ENCODE measurements at regions of chr11 and their contacts with region 1.

Region 1: DNA sequence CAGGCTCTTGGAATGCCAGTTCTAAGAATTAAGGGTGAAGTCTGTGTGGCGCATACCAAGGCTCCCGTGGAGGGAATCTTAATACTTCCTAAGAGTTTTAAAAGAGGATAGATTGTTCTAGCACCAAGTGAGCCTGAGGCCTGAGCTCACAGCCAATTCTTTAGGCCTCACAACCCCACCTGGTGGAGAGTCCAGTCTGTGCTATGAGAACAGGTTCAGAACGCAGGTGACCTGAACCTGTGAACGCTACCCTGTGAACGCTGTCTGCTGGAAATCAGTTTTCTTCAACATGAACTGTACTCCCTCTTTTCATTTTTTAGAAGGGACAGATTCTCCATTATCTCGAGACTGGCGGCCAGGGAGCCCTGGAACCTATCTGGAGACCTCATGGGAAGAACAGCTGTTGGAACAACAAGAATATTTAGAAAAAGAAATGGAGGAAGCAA is 43.2 kb upstream of the DLAT start:
- DNase-seq: peak in 6 of 10 donors; percentile 33 to 69 (median 58)
- H3K4me3 ChIP-seq: peak overlapping the region in 23 of 59 donors; percentile 1 to 85 (median 36)
- H3K27ac ChIP-seq: peak overlapping the region; percentile 82 to 99 (median 98)
- H3K27me3 ChIP-seq: no peaks in the 10 kb centered on the region
- CTCF ChIP-seq: peak; percentile 35 to 75 (median 61)

Region 2: GRCh38 chr11:111540114-111540936 is 441.7 kb before region 1 on chr11 and contains the start of gene LAYN:
- intact Hi-C with region 1: no loop called
- DNase-seq: peak in 9 of 10 donors; percentile 49 to 83 (median 61)
- H3K4me3 ChIP-seq: peak within 1 kb of the TSS; percentile 55 to 87 (median 73)
- H3K27ac ChIP-seq: peak within 1 kb of the TSS; percentile 1 to 92 (median 80)
- H3K27me3 ChIP-seq: peaks cover 0 to 45% (median 5%) of the 10 kb centered on the region in 45 donors
- CTCF ChIP-seq: peak in 5 of 56 donors; percentile 12 to 27 (median 24)
- total RNA-seq, gene LAYN: 4.3 to 39.1 (median 13.3) TPM

Region 3: GRCh38 chr11:111911563-111912401 is 70.3 kb before region 1 on chr11 and contains the start of gene CRYAB:
- intact Hi-C with region 1: loop called (anchors 2 to 5 kb)
- DNase-seq: peak; percentile 87 to 97 (median 94)
- H3K4me3 ChIP-seq: peak within 1 kb of the TSS; percentile 44 to 88 (median 68)
- H3K27ac ChIP-seq: peak within 1 kb of the TSS; percentile 92 to 100 (median 99)
- H3K27me3 ChIP-seq: no peaks in the 10 kb centered on the region
- CTCF ChIP-seq: peak in 1 of 56 donors; percentile 7
- total RNA-seq, gene CRYAB: 265 to 3,917 (median 1,020) TPM

Region 4: GRCh38 chr11:111926505-111927391 is 55.3 kb before region 1 on chr11:
- intact Hi-C with region 1: loop called in 1 of 2 experiments (anchors 5 kb)
- DNase-seq: peak; percentile 93 to 99 (median 98)
- H3K4me3 ChIP-seq: peak overlapping the region; percentile 25 to 83 (median 61)
- H3K27ac ChIP-seq: peak overlapping the region; percentile 58 to 97 (median 92)
- H3K27me3 ChIP-seq: no peaks in the 10 kb centered on the region
- CTCF ChIP-seq: peak in 36 of 56 donors; percentile 3 to 53 (median 26)

Region 5: GRCh38 chr11:111938687-111939160 is 43.3 kb before region 1 on chr11:
- intact Hi-C with region 1: loop called (anchors 2 kb)
- DNase-seq: peak in 1 of 10 donors; percentile 75
- H3K4me3 ChIP-seq: peak overlapping the region in 54 of 59 donors; percentile 7 to 86 (median 70)
- H3K27ac ChIP-seq: peak overlapping the region; percentile 51 to 96 (median 92)
- H3K27me3 ChIP-seq: no peaks in the 10 kb centered on the region
- CTCF ChIP-seq: peak in 1 of 56 donors; percentile 7

Region 6: GRCh38 chr11:112086422-112087191 is 104.6 kb after region 1 on chr11 and contains the starts of genes SDHD and TIMM8B:
- intact Hi-C with region 1: loop called in 1 of 2 experiments (anchors 10 kb)
- DNase-seq: peak; percentile 88 to 97 (median 95)
- H3K4me3 ChIP-seq: peak within 1 kb of the TSS; percentile 68 to 100 (median 94)
- H3K27ac ChIP-seq: peak within 1 kb of the TSS in 55 of 59 donors; percentile 14 to 94 (median 76)
- H3K27me3 ChIP-seq: no peaks in the 10 kb centered on the region
- CTCF ChIP-seq: peak in 52 of 56 donors; percentile 25 to 73 (median 56)
- total RNA-seq, gene SDHD: 43.8 to 85.0 (median 65.3) TPM
- total RNA-seq, gene TIMM8B: 25.1 to 51.5 (median 35.6) TPM